ENCODE measurements at regions of chr9 and their contacts with region 1.

Region 1: GRCh38 chr9:91433180-91433579 is 9.5 kb upstream of the NFIL3 start:
- DNase-seq: peak; percentile 84
- H3K4me3 ChIP-seq: no peak overlapping the region
- H3K27ac ChIP-seq: no peak overlapping the region
- H3K4me1 ChIP-seq: peaks cover 3% of the 10 kb centered on the region
- H3K27me3 ChIP-seq: no peaks in the 10 kb centered on the region
- CTCF ChIP-seq: peak; percentile 47 to 64

Region 2: GRCh38 chr9:90894986-90895687 is 538.0 kb before region 1 on chr9:
- CTCF ChIA-PET with region 1: no interaction called
- dilution Hi-C with region 1: no loop called
- in situ Hi-C with region 1: no loop called
- intact Hi-C with region 1: loop called (anchors 1 kb)
- DNase-seq: no peak
- H3K4me3 ChIP-seq: no peak overlapping the region
- H3K27ac ChIP-seq: no peak overlapping the region
- H3K4me1 ChIP-seq: no peaks in the 10 kb centered on the region
- H3K27me3 ChIP-seq: no peaks in the 10 kb centered on the region
- CTCF ChIP-seq: peak; percentile 47 to 66

Region 3: DNA sequence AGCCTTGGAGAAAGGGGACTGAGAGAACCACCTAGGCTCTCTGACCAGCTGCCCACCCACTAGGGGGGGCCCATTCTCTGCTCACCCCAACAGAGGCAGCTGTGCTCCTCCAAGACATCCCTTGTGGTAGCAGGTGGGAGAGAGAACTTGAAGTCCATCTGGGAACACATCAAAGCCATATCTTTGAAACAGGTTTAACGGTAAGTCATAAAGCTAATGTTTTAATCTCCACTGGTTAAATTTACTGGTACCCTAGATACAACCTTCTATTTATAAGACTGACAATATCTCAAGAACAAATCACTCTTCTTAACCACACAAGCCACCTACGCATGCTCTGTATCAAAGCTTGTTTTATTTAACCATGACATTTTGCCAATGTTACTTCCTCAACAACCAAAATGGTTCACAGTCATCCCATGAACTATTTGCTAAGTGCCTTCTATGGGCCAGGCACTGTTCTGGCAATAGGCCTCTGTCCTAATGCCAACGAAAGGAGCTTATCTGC is 91.9 kb before region 1 on chr9:
- CTCF ChIA-PET with region 1: no interaction called
- dilution Hi-C with region 1: no loop called
- in situ Hi-C with region 1: no loop called
- intact Hi-C with region 1: no loop called
- DNase-seq: peak; percentile 42
- H3K4me3 ChIP-seq: no peak overlapping the region
- H3K27ac ChIP-seq: no peak overlapping the region
- H3K4me1 ChIP-seq: no peaks in the 10 kb centered on the region
- H3K27me3 ChIP-seq: no peaks in the 10 kb centered on the region
- CTCF ChIP-seq: no peak

Region 4: DNA sequence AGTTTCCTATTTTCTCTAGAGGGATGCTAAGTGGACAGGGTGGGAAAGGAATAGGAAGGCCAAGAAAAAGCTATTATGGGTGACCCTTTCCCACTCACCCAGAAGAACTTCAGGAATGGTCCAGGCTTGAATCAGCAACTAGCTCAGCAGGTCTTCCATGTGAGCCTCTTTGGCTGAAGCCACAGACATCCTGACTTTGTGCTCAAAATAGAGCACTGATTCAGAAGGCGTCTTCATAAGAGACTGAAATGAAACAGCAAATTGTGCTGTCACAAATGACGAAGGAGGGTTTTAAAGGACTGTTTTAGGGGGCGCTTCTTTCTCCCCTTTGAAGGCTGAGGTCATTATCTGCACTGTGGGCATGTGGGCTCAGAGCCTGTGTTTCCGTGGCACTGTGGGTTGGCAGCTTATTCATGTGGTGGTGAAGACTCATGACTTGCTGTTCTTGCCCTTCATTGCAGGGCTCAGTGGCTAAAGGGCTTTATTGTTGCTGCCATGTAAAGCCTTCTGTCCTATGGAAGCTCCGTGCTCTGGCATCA is 56.2 kb after region 1 on chr9:
- CTCF ChIA-PET with region 1: no interaction called
- dilution Hi-C with region 1: loop called (anchors 5 kb)
- in situ Hi-C with region 1: no loop called
- intact Hi-C with region 1: no loop called
- DNase-seq: no peak
- H3K4me3 ChIP-seq: no peak overlapping the region
- H3K27ac ChIP-seq: no peak overlapping the region
- H3K4me1 ChIP-seq: no peaks in the 10 kb centered on the region
- H3K27me3 ChIP-seq: peaks cover 5% of the 10 kb centered on the region
- CTCF ChIP-seq: no peak

Measured in mammary epithelial cell (primary cell).